Caco-2 (cell line): ENCODE measurements at regions of chr16 and their contacts with region 1.

Region 1: DNA sequence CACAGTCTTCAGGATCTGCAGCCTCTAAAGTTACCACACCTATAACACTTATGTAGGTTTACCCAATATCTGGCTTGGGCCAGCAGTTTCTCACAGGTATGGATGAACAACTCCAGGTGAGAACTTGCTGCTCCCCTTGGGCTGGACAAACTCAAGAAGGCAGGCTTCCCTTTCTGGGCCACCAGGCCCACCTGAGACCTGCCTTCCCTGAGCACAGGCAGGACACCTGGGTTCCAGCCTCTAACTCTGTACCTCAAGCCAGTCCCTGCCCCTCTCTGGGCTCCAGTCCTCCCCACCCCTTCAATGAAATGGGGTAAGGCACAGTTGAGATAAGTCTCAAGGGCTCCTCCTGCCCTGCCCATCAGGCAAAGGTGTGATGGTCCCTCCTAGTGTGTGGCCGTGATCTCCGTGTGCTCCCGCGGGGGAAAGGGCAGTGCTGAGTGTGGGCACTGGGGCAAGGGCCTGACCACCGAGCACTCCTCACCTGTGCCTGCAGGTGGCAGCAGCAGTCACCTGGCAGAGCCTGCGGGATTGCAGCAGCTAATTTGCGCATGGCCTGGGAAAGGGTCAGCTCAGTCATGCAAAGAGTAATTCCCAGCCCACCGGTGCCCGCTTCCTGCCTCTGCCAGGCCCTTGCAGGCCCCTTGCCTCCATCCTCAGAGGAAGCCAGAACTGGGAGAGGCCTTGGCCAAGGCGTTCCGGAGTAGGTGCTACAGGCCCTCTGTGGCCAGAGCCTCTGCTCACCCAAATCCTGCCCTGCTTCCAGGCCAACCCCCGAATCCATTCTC is 28.2 kb upstream of the ADGRG1 start:
- DNase-seq: peak; percentile 84 to 88
- H3K4me3 ChIP-seq: no peak overlapping the region
- H3K4me3 Mint-ChIP-seq: no peak overlapping the region
- H3K27ac Mint-ChIP-seq: no peak overlapping the region
- H3K4me1 ChIP-seq: peaks cover 3% of the 10 kb centered on the region; the same call in 1 of the 2 replicates
- H3K4me1 Mint-ChIP-seq: no peaks in the 10 kb centered on the region
- H3K27me3 ChIP-seq: no peaks in the 10 kb centered on the region
- H3K27me3 Mint-ChIP-seq: no peaks in the 10 kb centered on the region
- CTCF ChIP-seq: peak; percentile 92 to 98

Region 2: GRCh38 chr16:57367116-57367752 is 233.0 kb before region 1 on chr16:
- CTCF ChIA-PET with region 1: no interaction called
- POLR2A ChIA-PET with region 1: no interaction called
- intact Hi-C with region 1: no loop called
- DNase-seq: no peak
- H3K4me3 ChIP-seq: no peak overlapping the region
- H3K4me3 Mint-ChIP-seq: no peak overlapping the region
- H3K27ac Mint-ChIP-seq: no peak overlapping the region
- H3K4me1 ChIP-seq: peaks cover under 1% of the 10 kb centered on the region; the same call in 1 of the 2 replicates
- H3K4me1 Mint-ChIP-seq: no peaks in the 10 kb centered on the region
- H3K27me3 ChIP-seq: no peaks in the 10 kb centered on the region
- H3K27me3 Mint-ChIP-seq: no peaks in the 10 kb centered on the region
- CTCF ChIP-seq: no peak

Region 3: DNA sequence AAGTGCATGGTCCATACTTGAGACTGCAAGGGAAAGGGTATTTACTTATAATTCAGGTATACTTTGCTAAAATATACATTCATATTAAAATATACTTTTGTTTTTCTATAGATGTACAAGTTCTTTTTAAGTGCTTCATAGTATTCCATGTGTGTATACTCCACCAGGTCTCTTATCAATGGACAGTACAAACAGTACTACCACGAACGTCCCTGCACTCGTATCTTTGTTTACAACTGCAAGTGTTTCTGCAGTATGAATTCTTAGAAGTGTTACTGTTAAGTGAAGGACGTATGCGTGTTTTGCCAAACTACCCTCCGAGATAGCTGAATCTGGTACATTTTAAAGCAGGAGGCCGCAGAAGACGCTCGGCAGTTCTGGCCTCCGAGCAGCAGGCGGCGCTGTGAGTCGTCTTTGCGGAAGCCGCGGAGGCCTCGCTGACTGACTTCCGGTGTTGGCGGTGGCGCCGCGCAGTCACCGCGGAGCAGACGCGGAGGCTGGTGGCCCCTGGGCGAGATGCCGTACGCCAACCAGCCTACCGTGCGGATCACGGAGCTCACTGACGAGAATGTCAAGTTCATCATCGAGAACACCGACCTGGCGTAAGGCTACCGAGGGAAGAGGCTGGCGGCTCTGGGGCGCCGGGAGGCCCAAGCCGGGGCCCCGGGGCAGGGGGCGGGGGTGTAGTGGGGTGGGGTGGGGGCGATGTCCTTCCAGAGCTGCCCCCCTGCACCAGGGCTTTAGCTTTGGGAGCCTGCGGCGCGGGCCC is 137.8 kb before region 1 on chr16 and contains the start of gene POLR2C:
- CTCF ChIA-PET with region 1: no interaction called
- POLR2A ChIA-PET with region 1: no interaction called
- intact Hi-C with region 1: no loop called
- DNase-seq: peak; percentile 88 to 95
- H3K4me3 ChIP-seq: peak within 1 kb of the TSS; percentile 73
- H3K4me3 Mint-ChIP-seq: peak within 1 kb of the TSS; percentile 85
- H3K27ac Mint-ChIP-seq: peak within 1 kb of the TSS; percentile 92
- H3K4me1 ChIP-seq: 0 out of 2 replicates have a peak, but pooled peaks cover 8% of the 10 kb centered on the region
- H3K4me1 Mint-ChIP-seq: no peaks in the 10 kb centered on the region
- H3K27me3 ChIP-seq: no peaks in the 10 kb centered on the region
- H3K27me3 Mint-ChIP-seq: no peaks in the 10 kb centered on the region
- CTCF ChIP-seq: peak; percentile 96 to 98
- total RNA-seq, gene POLR2C: 100 and 102 TPM in 2 replicates

Region 4: DNA sequence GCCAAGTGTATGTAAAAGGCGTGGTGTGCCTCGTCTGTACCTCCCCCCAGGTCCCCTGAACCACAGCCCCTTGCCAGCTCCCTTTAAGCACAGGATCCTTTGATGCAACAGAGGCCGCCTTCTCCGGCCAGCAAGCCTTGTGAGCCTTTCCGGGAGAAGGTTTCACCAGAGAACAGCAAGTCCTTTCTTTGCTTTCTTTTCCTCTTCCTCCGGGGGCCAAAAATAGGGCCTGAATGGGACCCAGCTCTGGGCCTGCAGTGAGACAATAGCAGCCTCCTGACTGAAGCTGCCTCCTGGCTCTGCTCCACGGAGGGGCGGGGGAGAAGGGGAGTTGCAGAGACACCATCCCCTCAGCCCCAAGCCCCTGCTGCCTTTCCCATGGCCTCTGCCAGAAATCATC is 37.2 kb after region 1 on chr16:
- CTCF ChIA-PET with region 1: interaction called, 8 read pairs
- POLR2A ChIA-PET with region 1: no interaction called
- intact Hi-C with region 1: loop called (anchors 2 kb)
- DNase-seq: no peak
- H3K4me3 ChIP-seq: no peak overlapping the region
- H3K4me3 Mint-ChIP-seq: no peak overlapping the region
- H3K27ac Mint-ChIP-seq: no peak overlapping the region
- H3K4me1 ChIP-seq: peaks cover 18% of the 10 kb centered on the region
- H3K4me1 Mint-ChIP-seq: peaks cover 11% of the 10 kb centered on the region
- H3K27me3 ChIP-seq: no peaks in the 10 kb centered on the region
- H3K27me3 Mint-ChIP-seq: no peaks in the 10 kb centered on the region
- CTCF ChIP-seq: no peak

Region 5: DNA sequence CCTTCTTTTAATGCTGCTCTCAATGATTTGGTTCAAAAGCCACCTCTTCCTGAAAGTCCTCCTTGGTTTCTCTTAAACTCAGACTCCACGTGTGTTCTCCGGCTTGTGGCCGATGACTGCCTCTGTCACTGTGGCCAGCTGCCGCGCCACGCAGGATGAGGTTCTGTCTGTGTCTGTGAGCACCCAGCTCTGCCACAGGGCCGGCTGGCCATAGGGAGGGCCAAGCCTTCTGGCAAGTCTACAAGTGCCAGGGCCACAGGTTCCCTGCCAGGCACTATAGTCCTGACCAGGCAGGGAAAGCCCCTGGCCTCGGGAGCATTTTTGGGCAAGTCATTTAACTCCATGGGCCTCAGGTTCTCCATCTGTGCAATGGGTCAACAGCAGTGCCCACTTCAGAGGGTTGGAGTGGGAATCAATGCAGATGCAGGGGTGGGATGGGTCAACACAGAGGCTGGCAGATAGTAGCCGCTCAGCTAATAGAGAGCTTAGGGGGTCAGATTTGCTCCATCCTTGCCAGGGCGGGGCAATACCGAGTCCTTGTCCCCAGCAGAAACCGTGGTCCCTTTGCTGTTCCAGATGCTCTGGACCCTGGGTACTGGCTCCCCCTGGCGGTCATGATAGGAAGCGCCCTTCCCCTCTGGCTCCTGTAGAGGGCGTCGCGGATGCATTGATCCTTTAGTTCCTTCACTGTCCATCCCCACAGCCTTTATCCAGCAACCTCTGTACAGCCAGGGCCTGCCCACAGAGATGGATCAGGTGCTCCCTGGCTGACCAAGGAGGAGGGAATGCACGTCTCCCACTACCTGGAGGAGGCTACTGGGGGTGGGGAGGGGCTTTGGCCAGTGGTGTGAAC is 48.6 kb after region 1 on chr16:
- CTCF ChIA-PET with region 1: interaction called, 9 read pairs
- POLR2A ChIA-PET with region 1: no interaction called
- intact Hi-C with region 1: loop called (anchors 1 kb)
- DNase-seq: peak; percentile 85 to 93
- H3K4me3 ChIP-seq: no peak overlapping the region
- H3K4me3 Mint-ChIP-seq: no peak overlapping the region
- H3K27ac Mint-ChIP-seq: no peak overlapping the region
- H3K4me1 ChIP-seq: peaks cover 10% of the 10 kb centered on the region; the same call in 1 of the 2 replicates
- H3K4me1 Mint-ChIP-seq: peaks cover 14% of the 10 kb centered on the region
- H3K27me3 ChIP-seq: no peaks in the 10 kb centered on the region
- H3K27me3 Mint-ChIP-seq: no peaks in the 10 kb centered on the region
- CTCF ChIP-seq: peak; percentile 100